Common myeloid progenitor, CD34-positive (primary cell): ENCODE measurements at regions of chr10 and their contacts with region 1.

Region 1: DNA sequence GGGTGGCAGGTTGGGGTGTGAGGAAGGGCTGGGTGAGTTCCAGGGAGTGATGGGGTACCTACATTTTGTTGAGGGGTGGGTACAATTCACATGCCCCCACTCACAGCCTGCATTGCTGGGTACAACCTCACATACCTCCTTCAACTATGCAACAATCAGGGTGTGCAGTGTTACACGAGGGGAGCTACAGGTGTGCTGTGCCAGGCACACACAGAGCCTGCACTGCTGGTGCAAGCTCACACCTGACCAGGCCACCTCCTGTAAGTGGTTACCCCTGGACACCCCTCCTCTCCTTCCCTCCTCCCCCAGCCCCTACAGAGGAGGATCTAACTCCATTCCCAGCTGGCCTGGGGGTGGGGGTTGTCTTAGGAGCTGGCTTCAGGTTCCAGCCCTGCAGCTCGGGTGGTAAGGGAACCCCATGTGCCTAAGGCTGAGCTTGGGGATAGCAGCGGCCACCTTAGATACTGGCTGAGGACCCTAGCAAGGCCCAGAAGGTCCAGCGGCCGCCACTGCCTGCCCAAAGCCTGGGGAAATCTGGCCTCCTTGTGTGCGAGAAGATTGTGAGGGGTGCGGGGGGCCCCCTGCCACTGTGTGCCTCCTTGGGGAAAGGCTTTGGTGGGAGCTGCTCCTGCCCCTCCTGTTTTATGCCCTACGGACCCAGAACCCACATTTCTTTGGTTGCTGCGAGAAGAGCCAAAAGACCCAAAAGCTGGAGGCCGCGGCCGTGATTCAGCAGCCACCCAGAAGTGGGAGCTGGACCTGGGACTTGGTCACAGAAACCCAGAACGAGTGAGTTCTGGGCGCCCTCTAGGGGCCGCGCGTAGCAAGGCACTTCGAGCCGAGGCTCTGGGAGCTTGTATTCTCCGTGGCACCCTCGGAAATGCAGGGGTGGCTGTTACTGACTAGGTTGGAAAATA is 10.8 kb downstream of the TLX1 start:
- DNase-seq: peak; percentile 80 to 89 (median 83)
- H3K4me3 ChIP-seq: no peak overlapping the region
- H3K27ac ChIP-seq: no peak overlapping the region
- H3K4me1 ChIP-seq: peaks cover 0 to 9% (median 4%) of the 10 kb centered on the region in 4 experiments
- H3K27me3 ChIP-seq: peaks cover 12 to 100% (median 71%) of the 10 kb centered on the region in 5 experiments

Region 2: DNA sequence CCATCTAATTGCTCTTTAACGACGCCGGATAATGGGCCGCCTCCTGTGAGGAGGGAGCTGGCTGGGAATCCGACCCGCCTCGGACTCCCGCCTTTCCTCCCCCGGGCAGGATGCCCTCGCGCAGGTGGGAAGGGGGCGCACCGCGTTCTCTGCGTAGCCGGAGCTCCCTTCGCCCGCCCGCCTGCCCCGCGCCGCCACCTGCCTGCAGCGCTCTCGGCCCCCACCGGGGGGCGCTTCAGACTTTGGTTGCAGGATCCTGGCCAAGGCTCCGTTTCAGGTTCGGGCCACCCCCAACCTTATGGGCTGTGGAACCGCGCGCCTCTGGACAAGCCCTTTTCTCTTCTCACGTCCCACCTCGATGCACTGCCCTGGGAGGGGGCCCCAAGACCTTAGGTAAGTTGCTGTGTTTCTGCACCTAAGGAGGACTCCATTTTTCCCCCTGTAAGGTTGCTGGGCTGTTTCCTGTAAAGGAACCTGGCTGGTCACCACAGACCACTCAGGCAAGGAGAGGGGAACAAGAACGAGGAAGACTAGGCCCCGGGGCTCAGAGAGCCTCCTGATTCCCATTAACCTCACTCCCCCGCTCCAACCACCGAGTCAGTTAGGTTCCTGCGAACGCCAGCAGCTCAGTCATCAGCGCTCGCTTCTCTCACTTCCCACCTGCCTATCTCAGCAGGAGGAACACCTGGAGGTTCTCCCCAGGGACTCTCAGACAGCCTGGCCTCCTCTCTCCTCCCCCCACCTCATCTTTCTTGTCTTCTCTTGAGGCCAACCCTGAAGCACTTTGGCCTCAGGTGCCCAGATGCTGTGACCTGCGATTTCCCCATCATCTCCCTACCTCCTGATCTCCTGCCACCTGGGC is 91.4 kb before region 1 on chr10:
- CTCF ChIA-PET with region 1: interaction called, 61 read pairs
- POLR2A ChIA-PET with region 1: no interaction called
- DNase-seq: peak; percentile 56 to 73 (median 70)
- H3K4me3 ChIP-seq: peak overlapping the region in 5 of 7 experiments; percentile 3 to 53 (median 17)
- H3K27ac ChIP-seq: no peak overlapping the region
- H3K4me1 ChIP-seq: peaks cover 5 to 38% (median 29%) of the 10 kb centered on the region in 4 experiments
- H3K27me3 ChIP-seq: peaks cover 8 to 56% (median 24%) of the 10 kb centered on the region in 5 experiments

Region 3: DNA sequence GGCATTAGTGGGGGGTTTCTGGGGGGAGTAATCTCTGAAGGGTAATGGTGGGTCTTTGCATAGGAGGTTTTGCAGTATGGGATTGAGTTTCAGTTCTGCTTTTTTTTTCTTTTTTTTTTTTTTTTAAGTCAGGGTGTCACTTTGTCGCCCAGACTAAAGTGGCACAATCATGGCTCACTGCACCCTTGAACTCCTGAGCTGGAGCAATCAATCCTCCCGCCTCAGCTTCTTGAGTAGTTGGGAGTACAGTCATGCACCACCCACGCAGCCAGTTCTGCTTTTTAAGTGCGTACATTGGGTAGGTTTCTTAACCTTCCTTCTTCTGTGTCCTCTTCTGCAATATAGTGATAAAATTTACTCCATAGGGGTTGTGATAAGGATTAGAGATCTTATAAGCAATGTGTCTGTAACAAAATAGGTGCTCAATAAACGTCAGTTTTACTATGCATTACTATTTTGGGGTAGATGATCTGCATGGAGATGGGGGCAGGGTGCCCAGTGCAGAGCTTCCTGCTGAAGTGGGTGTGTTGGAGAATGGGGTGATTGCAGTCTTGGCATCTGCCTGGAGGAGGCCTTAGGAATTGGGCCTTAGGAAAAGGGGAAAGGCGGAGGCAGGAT is 70.5 kb before region 1 on chr10:
- CTCF ChIA-PET with region 1: interaction called, 11 read pairs
- POLR2A ChIA-PET with region 1: interaction called, 5 read pairs
- DNase-seq: peak; percentile 69 to 91 (median 90)
- H3K4me3 ChIP-seq: no peak overlapping the region
- H3K27ac ChIP-seq: no peak overlapping the region
- H3K4me1 ChIP-seq: peaks cover 0 to 35% (median 17%) of the 10 kb centered on the region in 4 experiments
- H3K27me3 ChIP-seq: peaks cover 6 to 61% (median 32%) of the 10 kb centered on the region in 5 experiments

Region 4: DNA sequence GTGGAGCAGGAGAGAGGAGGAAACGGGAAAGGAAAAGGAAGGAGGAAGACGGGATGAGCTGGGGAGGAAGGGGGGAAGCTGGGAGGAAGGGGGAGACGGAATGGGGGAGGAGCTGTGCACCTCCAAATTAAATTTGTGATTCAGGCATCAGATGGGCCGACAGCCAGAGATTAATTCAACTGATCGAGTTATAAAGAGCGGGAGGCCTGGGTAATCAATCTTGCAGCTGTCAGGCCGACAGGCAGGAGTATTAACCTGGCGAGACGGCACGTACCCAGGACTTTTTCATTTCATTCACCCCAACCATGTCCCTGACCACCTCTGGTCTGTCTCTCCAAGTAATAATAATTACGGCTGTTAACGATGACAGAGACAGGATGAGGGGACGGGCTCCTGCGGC is 53.9 kb before region 1 on chr10:
- CTCF ChIA-PET with region 1: interaction called, 434 read pairs
- POLR2A ChIA-PET with region 1: no interaction called
- DNase-seq: no peak
- H3K4me3 ChIP-seq: no peak overlapping the region
- H3K27ac ChIP-seq: no peak overlapping the region
- H3K4me1 ChIP-seq: no peaks in the 10 kb centered on the region
- H3K27me3 ChIP-seq: peaks cover 7 to 98% (median 50%) of the 10 kb centered on the region in 5 experiments

Region 5: GRCh38 chr10:101120884-101121653 is 20.8 kb before region 1 on chr10:
- CTCF ChIA-PET with region 1: interaction called, 26 read pairs
- POLR2A ChIA-PET with region 1: no interaction called
- DNase-seq: peak in 2 of 3 donors; percentile 55 to 57
- H3K4me3 ChIP-seq: peak overlapping the region; percentile 18 to 81 (median 63)
- H3K27ac ChIP-seq: no peak overlapping the region
- H3K4me1 ChIP-seq: peaks cover 0 to 19% (median 14%) of the 10 kb centered on the region in 4 experiments
- H3K27me3 ChIP-seq: peaks cover 9 to 97% (median 34%) of the 10 kb centered on the region in 5 experiments